ENCODE measurements at regions of chr18 and their contacts with region 1.

Region 1: DNA sequence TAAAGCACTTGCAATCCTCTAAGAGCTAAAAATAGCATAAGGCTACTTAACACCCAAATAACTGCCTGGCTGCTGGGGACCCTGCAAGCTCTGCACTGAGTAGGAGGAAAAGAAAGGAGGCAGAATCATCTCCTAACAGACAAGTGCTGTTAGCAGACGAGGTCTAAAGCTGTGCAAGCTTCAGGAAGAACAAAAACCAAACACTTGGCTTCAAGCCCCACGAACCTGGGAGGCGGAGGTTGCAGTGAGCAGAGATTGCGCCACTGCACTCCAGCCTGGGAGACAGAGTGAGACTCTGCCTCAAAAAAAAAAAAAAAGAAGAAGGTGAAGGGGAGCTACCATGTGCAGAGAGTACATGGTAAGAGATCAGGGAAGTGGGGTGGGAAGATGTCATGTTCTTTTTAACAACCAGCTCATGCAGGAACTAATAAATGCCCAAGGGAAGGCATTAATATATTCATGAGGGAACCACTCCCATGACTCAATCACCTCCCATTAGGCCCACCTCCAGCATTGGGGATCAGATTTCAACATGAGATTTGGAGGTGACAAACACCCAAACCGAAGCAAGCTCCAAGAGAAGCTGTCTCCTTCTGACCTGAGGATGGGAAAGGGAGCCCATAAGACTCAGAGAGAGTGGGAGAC is 28.8 kb upstream of the INO80C start:
- DNase-seq: peak; percentile 34
- H3K4me3 ChIP-seq: no peak overlapping the region
- H3K27ac ChIP-seq: no peak overlapping the region
- H3K4me1 ChIP-seq: peaks cover 15 to 25% (median 18%) of the 10 kb centered on the region in 4 donors
- H3K27me3 ChIP-seq: no peaks in the 10 kb centered on the region
- CTCF ChIP-seq: no peak
- EP300 ChIP-seq: no peak
- POLR2A ChIP-seq: no peak

Region 2: DNA sequence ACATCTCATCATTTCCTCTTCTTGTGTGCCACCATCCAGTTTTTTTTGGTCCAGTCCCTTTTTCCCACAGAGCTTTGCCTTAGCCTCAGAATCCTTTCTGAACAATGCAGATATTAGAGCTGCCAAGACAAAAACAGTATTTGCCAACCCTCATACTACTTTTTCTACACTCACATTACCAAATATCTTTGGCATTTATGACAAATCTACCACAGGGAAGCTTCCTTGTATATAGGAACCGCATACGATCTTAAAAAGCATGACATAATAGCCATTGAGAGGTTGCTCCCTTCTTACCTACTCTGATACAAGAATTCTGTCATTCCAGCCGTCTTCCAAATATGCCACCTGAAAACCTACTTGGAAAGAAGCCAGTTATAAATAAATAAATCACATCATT is 191.8 kb before region 1 on chr18:
- intact Hi-C with region 1: no loop called
- DNase-seq: no peak
- H3K4me3 ChIP-seq: no peak overlapping the region
- H3K27ac ChIP-seq: no peak overlapping the region
- H3K4me1 ChIP-seq: peaks cover 0 to 24% (median 11%) of the 10 kb centered on the region in 4 donors
- H3K27me3 ChIP-seq: no peaks in the 10 kb centered on the region
- CTCF ChIP-seq: no peak
- EP300 ChIP-seq: no peak
- POLR2A ChIP-seq: no peak

Region 3: DNA sequence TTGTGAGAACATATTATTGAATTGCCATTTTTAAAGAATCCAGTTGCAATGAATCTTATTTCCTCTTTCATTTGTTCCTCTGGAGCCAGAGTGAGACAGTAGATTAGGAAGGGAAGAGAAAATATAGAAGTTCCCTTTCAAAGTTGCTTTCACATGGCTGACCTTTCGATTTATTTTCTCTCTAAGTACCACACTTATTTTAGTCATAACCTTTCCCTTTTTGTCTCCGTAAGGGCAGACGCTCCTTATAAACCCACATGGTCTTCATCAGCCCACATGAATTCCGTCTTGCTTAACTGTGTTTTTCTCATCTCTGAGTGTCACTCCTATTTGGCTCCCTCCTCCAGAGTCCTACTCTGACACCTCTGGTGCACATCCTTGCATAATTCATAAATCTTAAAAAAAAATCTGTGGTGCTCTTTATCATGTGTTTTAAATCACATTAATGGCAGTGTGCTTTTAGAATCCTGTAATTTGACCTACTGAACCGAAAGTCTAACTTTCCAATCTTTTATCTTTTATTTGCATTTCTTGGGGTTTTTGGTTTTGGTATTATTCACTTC is 111.0 kb before region 1 on chr18:
- intact Hi-C with region 1: loop called (anchors 10 kb)
- DNase-seq: no peak
- H3K4me3 ChIP-seq: no peak overlapping the region
- H3K27ac ChIP-seq: no peak overlapping the region
- H3K4me1 ChIP-seq: peaks cover 0 to 15% (median 0%) of the 10 kb centered on the region in 4 donors
- H3K27me3 ChIP-seq: no peaks in the 10 kb centered on the region
- CTCF ChIP-seq: no peak
- EP300 ChIP-seq: no peak
- POLR2A ChIP-seq: no peak

Region 4: DNA sequence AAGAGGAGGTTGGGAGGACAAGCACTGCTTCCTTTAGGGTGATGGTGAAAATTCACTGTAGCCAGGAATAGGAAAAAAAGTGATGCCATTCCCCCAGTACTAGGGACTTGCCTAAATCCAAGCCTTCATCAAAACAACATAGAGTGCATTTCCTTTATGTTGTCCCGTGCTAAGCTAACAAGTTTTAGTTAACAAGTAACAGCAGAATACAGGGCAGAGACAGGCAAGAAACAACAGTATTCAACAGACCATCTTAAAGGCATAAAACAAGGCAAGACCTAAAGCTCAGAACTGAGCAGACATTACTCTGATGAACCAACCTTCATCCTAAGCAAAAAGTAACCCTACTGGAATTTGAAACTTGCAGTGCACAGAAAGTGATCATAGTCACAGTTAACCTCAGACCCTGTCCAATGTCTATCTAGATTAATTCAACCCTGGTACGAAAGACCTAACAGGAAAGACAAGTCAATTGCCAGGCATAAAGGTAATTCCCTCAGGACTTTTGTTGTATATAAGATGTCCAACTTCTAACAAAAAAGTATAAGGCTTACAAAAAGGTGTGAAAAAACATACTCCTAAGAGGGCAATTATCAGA is 20.5 kb after region 1 on chr18:
- intact Hi-C with region 1: loop called (anchors 2 kb)
- DNase-seq: no peak
- H3K4me3 ChIP-seq: no peak overlapping the region
- H3K27ac ChIP-seq: no peak overlapping the region
- H3K4me1 ChIP-seq: no peaks in the 10 kb centered on the region
- H3K27me3 ChIP-seq: no peaks in the 10 kb centered on the region
- CTCF ChIP-seq: no peak
- EP300 ChIP-seq: no peak
- POLR2A ChIP-seq: no peak

Region 5: GRCh38 chr18:35564795-35565453 is 38.3 kb after region 1 on chr18:
- intact Hi-C with region 1: loop called (anchors 5 kb)
- DNase-seq: no peak
- H3K4me3 ChIP-seq: no peak overlapping the region
- H3K27ac ChIP-seq: no peak overlapping the region
- H3K4me1 ChIP-seq: no peaks in the 10 kb centered on the region
- H3K27me3 ChIP-seq: no peaks in the 10 kb centered on the region
- CTCF ChIP-seq: no peak
- EP300 ChIP-seq: no peak
- POLR2A ChIP-seq: no peak

Region 6: GRCh38 chr18:35581898-35582641 is 55.5 kb after region 1 on chr18:
- intact Hi-C with region 1: no loop called
- DNase-seq: no peak
- H3K4me3 ChIP-seq: peak overlapping the region; percentile 68 to 81 (median 75)
- H3K27ac ChIP-seq: peak overlapping the region; percentile 75 to 84 (median 80)
- H3K4me1 ChIP-seq: peaks cover 18 to 34% (median 29%) of the 10 kb centered on the region in 4 donors
- H3K27me3 ChIP-seq: no peaks in the 10 kb centered on the region
- CTCF ChIP-seq: no peak
- EP300 ChIP-seq: no peak
- POLR2A ChIP-seq: no peak

Measured in esophagus muscularis mucosa (tissue), 4 donors.